CD8-positive, alpha-beta memory T cell (primary cell): ENCODE measurements at regions of chr12 and their contacts with region 1.

Region 1: GRCh38 chr12:106976668-106977067 is 10.3 kb downstream of the MTERF2 start:
- DNase-seq: no peak
- H3K4me3 ChIP-seq: no peak overlapping the region
- H3K4me3 Mint-ChIP-seq: no peak overlapping the region
- H3K27ac ChIP-seq: no peak overlapping the region
- H3K27ac Mint-ChIP-seq: peak overlapping the region in 1 of 8 donors; percentile 36
- H3K4me1 ChIP-seq: no peaks in the 10 kb centered on the region
- H3K4me1 Mint-ChIP-seq: peaks cover 2 to 13% (median 11%) of the 10 kb centered on the region in 3 donors
- H3K27me3 ChIP-seq: no peaks in the 10 kb centered on the region
- H3K27me3 Mint-ChIP-seq: no peaks in the 10 kb centered on the region

Region 2: DNA sequence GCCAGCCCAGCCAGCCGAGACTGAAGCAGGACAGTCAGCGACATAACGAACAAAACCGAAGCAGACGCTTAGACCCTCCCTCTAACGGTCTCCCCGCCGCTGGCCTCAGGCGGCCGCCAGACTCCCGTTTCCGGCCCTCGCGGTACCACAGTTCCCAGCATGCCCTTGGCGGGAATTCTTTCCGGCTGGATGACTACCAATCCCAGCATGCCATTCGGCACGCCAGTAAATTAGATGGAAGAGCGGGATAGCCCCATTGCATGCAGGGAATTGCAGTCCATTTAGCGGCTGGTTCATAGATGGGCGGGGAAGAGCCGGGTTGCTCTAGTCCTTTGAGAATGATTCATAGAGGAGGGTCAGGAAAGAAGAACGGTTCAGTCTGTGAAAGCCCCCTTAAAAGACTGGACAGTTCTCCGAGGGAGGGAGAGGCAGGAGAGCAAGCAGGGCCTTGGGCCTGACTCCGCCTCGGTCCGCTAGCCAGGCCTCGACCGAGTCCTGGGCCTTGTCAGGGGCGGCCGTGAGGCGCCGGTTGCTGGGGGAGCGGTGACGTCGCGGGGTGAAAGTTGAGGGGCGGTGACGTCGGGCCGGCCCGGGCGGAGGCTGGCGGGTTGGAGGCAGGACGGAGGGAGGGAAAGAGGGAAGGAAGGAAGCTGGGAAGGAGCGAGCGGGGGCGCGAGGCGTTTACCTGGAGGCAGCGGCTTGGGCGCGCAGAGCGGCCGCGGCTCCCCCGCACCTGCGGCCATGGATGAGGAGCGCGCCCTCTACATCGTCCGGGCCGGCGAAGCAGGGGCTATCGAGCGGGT is 202.5 kb before region 1 on chr12 and contains the start of gene RIC8B:
- CTCF ChIA-PET with region 1: no interaction called
- POLR2A ChIA-PET with region 1: no interaction called
- DNase-seq: peak; percentile 61 to 83 (median 76)
- H3K4me3 ChIP-seq: peak within 1 kb of the TSS; percentile 97
- H3K4me3 Mint-ChIP-seq: peak within 1 kb of the TSS; percentile 88 to 99 (median 96)
- H3K27ac ChIP-seq: peak within 1 kb of the TSS; percentile 93
- H3K27ac Mint-ChIP-seq: peak within 1 kb of the TSS; percentile 87 to 100 (median 99)
- H3K4me1 ChIP-seq: peaks cover 18% of the 10 kb centered on the region
- H3K4me1 Mint-ChIP-seq: peaks cover 40 to 48% (median 44%) of the 10 kb centered on the region in 3 donors
- H3K27me3 ChIP-seq: no peaks in the 10 kb centered on the region
- H3K27me3 Mint-ChIP-seq: peaks cover 0 to 5% of the 10 kb centered on the region in 2 donors
- total RNA-seq, gene RIC8B: 9.9 to 11.2 TPM

Region 3: DNA sequence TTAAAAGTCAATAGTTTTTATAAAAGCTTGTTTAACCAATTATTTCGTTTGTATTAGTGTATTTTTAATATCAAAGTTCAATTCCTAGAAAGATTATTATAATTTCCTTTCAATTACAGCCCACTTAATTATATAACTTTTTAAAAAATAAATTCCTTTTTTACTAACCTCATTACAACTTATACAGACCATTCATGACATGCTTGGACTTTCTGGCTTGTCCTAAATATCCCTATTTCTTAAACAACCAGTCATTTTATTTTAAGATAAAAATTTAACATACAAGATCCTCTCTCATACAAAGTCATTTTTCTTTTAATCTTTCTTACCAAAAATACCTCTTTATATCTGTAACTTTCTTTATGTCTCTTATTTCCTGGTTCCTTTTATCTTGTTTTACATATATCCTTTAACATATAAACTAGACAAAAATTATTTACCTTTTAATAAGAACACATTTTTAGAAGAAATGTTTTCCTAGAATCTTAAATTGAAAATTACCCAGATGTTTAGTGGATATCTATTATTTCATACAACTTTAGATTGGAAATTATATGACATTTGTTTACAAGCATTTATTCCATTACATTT is 31.3 kb before region 1 on chr12:
- CTCF ChIA-PET with region 1: no interaction called
- POLR2A ChIA-PET with region 1: interaction called, 10 read pairs
- DNase-seq: no peak
- H3K4me3 ChIP-seq: no peak overlapping the region
- H3K4me3 Mint-ChIP-seq: no peak overlapping the region
- H3K27ac ChIP-seq: no peak overlapping the region
- H3K27ac Mint-ChIP-seq: no peak overlapping the region
- H3K4me1 ChIP-seq: no peaks in the 10 kb centered on the region
- H3K4me1 Mint-ChIP-seq: no peaks in the 10 kb centered on the region
- H3K27me3 ChIP-seq: no peaks in the 10 kb centered on the region
- H3K27me3 Mint-ChIP-seq: peaks cover 0 to 4% of the 10 kb centered on the region in 2 donors